B cell (primary cell): ENCODE measurements at regions of chr5 and their contacts with region 1.

Region 1: DNA sequence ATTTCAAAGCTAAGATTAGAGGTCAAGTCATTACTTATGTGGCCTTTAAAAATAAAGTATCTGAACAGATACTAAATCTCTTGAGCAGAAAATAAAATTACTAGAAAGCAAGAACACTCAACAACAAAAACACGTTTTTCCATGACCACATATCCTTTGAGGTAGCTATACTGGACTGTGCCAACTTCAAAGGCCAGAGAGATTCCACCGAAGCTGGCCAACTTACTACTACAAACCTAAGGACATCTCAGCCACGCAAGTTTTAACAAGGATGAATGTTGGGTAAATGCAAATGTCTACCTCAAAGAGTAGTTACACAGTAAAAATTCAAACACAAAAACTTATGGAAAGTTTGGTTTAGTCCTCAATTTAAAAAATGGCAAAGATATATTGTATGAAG is 18.9 kb downstream of the PFDN1 start:
- DNase-seq: no peak
- ATAC-seq: no peak
- H3K4me3 ChIP-seq: peak overlapping the region in 1 of 5 experiments; percentile 66
- H3K4me3 Mint-ChIP-seq: peak overlapping the region; percentile 88
- H3K27ac ChIP-seq: peak overlapping the region in 1 of 2 donors; percentile 60
- H3K27ac Mint-ChIP-seq: peak overlapping the region; percentile 59
- H3K4me1 ChIP-seq: peaks cover 15 to 19% of the 10 kb centered on the region in 2 donors
- H3K4me1 Mint-ChIP-seq: peaks cover 27% of the 10 kb centered on the region
- H3K27me3 ChIP-seq: no peaks in the 10 kb centered on the region
- H3K27me3 Mint-ChIP-seq: no peaks in the 10 kb centered on the region
- CTCF ChIP-seq: no peak

Region 2: GRCh38 chr5:140302786-140303639 is 19.0 kb after region 1 on chr5 and contains the start of gene PFDN1:
- CTCF ChIA-PET with region 1: interaction called, 5 read pairs
- POLR2A ChIA-PET with region 1: interaction called, 7 read pairs
- intact Hi-C with region 1: loop called (anchors 1 kb)
- DNase-seq: peak; percentile 94
- ATAC-seq: peak; percentile 98
- H3K4me3 ChIP-seq: peak within 1 kb of the TSS; percentile 85 to 96 (median 91)
- H3K4me3 Mint-ChIP-seq: peak within 1 kb of the TSS; percentile 97
- H3K27ac ChIP-seq: peak within 1 kb of the TSS; percentile 74 to 82
- H3K27ac Mint-ChIP-seq: peak within 1 kb of the TSS; percentile 95
- H3K4me1 ChIP-seq: peaks cover 12% of the 10 kb centered on the region in 2 donors
- H3K4me1 Mint-ChIP-seq: peaks cover 13% of the 10 kb centered on the region
- H3K27me3 ChIP-seq: no peaks in the 10 kb centered on the region
- H3K27me3 Mint-ChIP-seq: peaks cover 9% of the 10 kb centered on the region
- CTCF ChIP-seq: no peak
- total RNA-seq, gene PFDN1: 29.8 and 30.3 TPM in 2 replicates